Spleen (tissue), 13 donors: ENCODE measurements at regions of chr2 and their contacts with region 1.

Region 1: GRCh38 chr2:190088917-190089316 is 26.4 kb upstream of the MSTN start:
- DNase-seq: no peak
- H3K4me3 ChIP-seq: no peak overlapping the region
- H3K27ac ChIP-seq: no peak overlapping the region
- H3K4me1 ChIP-seq: no peaks in the 10 kb centered on the region
- H3K27me3 ChIP-seq: no peaks in the 10 kb centered on the region
- CTCF ChIP-seq: peak in 7 of 11 experiments; percentile 37 to 68 (median 56)
- POLR2A ChIP-seq: no peak

Region 2: GRCh38 chr2:190005513-190005912 is 83.4 kb before region 1 on chr2:
- intact Hi-C with region 1: no loop called
- DNase-seq: no peak
- H3K4me3 ChIP-seq: no peak overlapping the region
- H3K27ac ChIP-seq: no peak overlapping the region
- H3K4me1 ChIP-seq: no peaks in the 10 kb centered on the region
- H3K27me3 ChIP-seq: no peaks in the 10 kb centered on the region
- CTCF ChIP-seq: no peak
- POLR2A ChIP-seq: no peak

Region 3: DNA sequence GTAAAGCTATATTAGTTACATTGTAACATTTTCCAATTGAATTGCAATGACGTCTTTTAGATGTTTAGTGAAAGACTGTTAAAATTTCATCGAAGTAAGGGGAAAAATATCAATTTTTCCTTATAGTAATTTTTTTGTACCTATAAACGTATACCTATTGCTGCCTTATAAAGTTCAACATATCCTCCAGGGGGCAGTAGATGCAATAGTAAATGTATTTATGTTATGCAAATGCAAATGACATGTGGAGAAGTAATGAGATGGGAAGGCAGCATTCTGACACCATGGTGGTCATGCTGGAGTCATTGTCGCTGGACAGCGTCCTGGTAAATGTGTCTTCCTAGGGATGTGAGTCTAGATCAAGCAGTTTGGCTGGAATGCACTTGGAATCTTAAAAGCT is 65.1 kb before region 1 on chr2:
- intact Hi-C with region 1: no loop called
- DNase-seq: no peak
- H3K4me3 ChIP-seq: no peak overlapping the region
- H3K27ac ChIP-seq: no peak overlapping the region
- H3K4me1 ChIP-seq: no peaks in the 10 kb centered on the region
- H3K27me3 ChIP-seq: no peaks in the 10 kb centered on the region
- CTCF ChIP-seq: peak in 6 of 11 experiments; percentile 13 to 44 (median 36)
- POLR2A ChIP-seq: no peak

Region 4: GRCh38 chr2:190277234-190278112 is 188.6 kb after region 1 on chr2:
- intact Hi-C with region 1: loop called (anchors 5 kb)
- DNase-seq: no peak
- H3K4me3 ChIP-seq: no peak overlapping the region
- H3K27ac ChIP-seq: no peak overlapping the region
- H3K4me1 ChIP-seq: peaks cover 0 to 7% (median 2%) of the 10 kb centered on the region in 6 donors
- H3K27me3 ChIP-seq: no peaks in the 10 kb centered on the region
- CTCF ChIP-seq: peak in 5 of 11 experiments; percentile 16 to 40 (median 22)
- POLR2A ChIP-seq: no peak

Region 5: GRCh38 chr2:190369635-190370034 is 280.7 kb after region 1 on chr2:
- intact Hi-C with region 1: loop called (anchors 5 kb)
- DNase-seq: no peak
- H3K4me3 ChIP-seq: no peak overlapping the region
- H3K27ac ChIP-seq: no peak overlapping the region
- H3K4me1 ChIP-seq: peaks cover 0 to 5% (median 0%) of the 10 kb centered on the region in 6 donors
- H3K27me3 ChIP-seq: no peaks in the 10 kb centered on the region
- CTCF ChIP-seq: no peak
- POLR2A ChIP-seq: no peak

Region 6: DNA sequence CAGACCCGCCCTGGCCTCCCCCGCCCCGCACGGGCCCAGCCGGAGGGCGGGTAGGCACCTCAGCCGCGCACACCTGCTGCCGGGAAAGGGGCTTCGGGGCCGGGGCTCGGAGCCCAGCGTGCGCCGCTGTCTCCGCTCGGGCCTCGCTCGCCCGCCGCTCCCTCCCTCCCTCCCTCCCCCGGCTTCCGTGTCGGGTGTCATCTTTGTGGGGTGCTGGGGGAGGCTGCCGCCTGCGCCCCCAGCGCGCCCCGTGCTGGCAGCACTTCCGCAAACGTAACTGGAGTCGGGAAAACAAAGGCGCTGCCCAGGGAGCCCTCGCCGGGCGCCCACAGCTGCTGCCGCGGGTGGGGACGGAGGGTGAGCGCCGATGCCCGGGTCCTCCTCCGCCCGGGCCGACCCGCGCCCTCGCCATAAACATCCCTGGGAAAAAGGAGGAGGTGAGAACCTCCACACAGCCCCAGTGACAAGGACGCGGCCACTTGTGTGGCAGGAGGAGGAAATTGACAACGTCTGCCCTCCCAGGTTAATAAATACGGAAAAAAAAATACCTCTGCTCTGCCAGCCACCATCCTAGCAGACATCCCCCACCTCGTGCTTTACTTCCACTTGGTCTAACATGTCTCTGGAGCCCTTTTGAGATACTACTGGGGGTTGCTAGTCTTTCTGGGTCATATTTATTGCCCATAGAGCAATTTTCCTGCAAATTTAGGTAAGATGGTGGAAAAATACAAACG is 319.8 kb after region 1 on chr2:
- intact Hi-C with region 1: no loop called
- DNase-seq: no peak
- H3K4me3 ChIP-seq: peak overlapping the region; percentile 48 to 83 (median 76)
- H3K27ac ChIP-seq: peak overlapping the region; percentile 91 to 96 (median 95)
- H3K4me1 ChIP-seq: peaks cover 8 to 63% (median 46%) of the 10 kb centered on the region in 6 donors
- H3K27me3 ChIP-seq: peaks cover 0 to 7% (median 0%) of the 10 kb centered on the region in 7 donors
- CTCF ChIP-seq: no peak
- POLR2A ChIP-seq: peak in 2 of 3 donors; percentile 12 to 28